Heart left ventricle (tissue), 16 donors: ENCODE measurements at regions of chr2 and their contacts with region 1.

Region 1: GRCh38 chr2:158968396-158969161 is at the start of gene TANC1:
- DNase-seq: peak; percentile 95 to 97 (median 96)
- ATAC-seq: peak; percentile 88 to 97 (median 94)
- H3K4me3 ChIP-seq: peak within 1 kb of the TSS; percentile 64 to 93 (median 86)
- H3K27ac ChIP-seq: peak within 1 kb of the TSS; percentile 90 to 97 (median 94)
- H3K4me1 ChIP-seq: peaks cover 0 to 64% (median 37%) of the 10 kb centered on the region in 12 donors
- H3K27me3 ChIP-seq: peaks cover 0 to 12% (median 0%) of the 10 kb centered on the region in 9 donors
- CTCF ChIP-seq: no peak
- POLR2A ChIP-seq: peak; percentile 57 to 98
- total RNA-seq, gene TANC1: 41.2 to 91.1 (median 74.0) TPM

Region 2: DNA sequence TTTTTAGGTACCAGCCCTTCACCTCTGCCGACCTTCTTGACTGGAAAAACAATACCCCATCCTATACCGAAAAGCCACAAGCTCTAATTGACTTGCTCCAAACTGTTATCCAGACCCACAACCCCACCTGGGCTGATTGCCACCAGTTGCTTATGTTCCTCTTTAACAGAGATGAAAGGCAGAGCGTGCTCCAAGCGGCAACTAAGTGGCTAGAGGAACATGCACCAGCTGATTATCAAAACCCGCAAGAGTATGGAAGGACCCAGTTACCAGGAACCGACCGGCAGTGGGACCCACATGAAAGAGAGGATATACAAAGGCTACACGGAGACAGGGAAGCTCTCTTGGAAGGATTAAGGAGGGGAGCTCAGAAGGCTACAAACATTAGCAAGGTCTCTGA is 86.3 kb before region 1 on chr2:
- intact Hi-C with region 1: no loop called
- DNase-seq: no peak
- ATAC-seq: no peak
- H3K4me3 ChIP-seq: no peak overlapping the region
- H3K27ac ChIP-seq: no peak overlapping the region
- H3K4me1 ChIP-seq: no peaks in the 10 kb centered on the region
- H3K27me3 ChIP-seq: no peaks in the 10 kb centered on the region
- CTCF ChIP-seq: no peak
- POLR2A ChIP-seq: no peak

Region 3: GRCh38 chr2:159010340-159010739 is 41.8 kb after region 1 on chr2:
- intact Hi-C with region 1: loop called in 2 of 10 experiments (anchors 5 kb)
- DNase-seq: no peak
- ATAC-seq: no peak
- H3K4me3 ChIP-seq: no peak overlapping the region
- H3K27ac ChIP-seq: no peak overlapping the region
- H3K4me1 ChIP-seq: peaks cover 2 to 44% (median 29%) of the 10 kb centered on the region in 12 donors
- H3K27me3 ChIP-seq: no peaks in the 10 kb centered on the region
- CTCF ChIP-seq: no peak
- POLR2A ChIP-seq: no peak

Region 4: GRCh38 chr2:159030674-159031380 is 62.2 kb after region 1 on chr2:
- intact Hi-C with region 1: loop called in 3 of 10 experiments (anchors 2 to 5 kb)
- DNase-seq: peak; percentile 63 to 80 (median 71)
- ATAC-seq: peak; percentile 59 to 89 (median 85)
- H3K4me3 ChIP-seq: no peak overlapping the region
- H3K27ac ChIP-seq: peak overlapping the region; percentile 67 to 92 (median 82)
- H3K4me1 ChIP-seq: peaks cover 9 to 78% (median 54%) of the 10 kb centered on the region in 12 donors
- H3K27me3 ChIP-seq: no peaks in the 10 kb centered on the region
- CTCF ChIP-seq: no peak
- POLR2A ChIP-seq: no peak